MCF 10A (cell line): ENCODE measurements at regions of chrX and their contacts with region 1.

Region 1: DNA sequence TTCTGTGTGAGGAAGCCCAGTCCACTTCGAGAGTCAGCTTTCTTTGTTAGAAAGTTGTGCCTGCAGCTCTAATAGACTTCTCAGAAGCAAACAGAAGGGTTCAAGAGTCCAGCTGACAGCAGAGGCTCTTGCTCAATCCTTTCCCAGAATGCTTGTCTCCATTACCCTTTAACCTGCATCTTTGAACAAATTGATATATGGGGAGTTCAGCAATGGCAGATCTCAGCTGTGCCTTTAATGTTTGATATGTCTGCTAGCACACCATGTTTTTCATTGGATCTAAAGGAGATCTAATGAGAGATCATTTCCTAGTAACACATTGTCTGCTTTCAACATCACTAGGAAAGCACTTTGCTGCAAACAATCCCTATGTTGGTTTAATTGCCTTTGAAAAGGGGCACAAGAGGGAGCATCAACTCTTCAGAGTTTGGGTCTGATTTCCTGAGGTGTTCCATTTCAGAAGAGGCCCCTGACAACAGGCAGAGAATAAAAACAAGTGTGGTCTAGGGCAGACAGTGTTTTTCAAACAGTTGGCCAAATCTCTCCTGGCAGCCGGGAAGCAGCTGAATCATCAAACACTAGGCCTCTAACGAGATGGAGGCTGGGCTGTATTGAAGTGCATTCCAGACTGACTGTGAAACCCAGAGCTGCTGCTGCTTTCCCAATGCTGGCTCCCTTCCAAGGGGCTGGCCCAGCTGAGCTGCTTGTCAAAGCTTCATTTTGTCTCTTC is 55.5 kb downstream of the LUZP4 start:
- DNase-seq: peak; percentile 93
- H3K4me3 Mint-ChIP-seq: no peak overlapping the region
- H3K27ac Mint-ChIP-seq: peak overlapping the region; percentile 69
- H3K4me1 Mint-ChIP-seq: no peaks in the 10 kb centered on the region
- H3K27me3 Mint-ChIP-seq: peaks cover 41% of the 10 kb centered on the region
- CTCF ChIP-seq: no peak

Region 2: DNA sequence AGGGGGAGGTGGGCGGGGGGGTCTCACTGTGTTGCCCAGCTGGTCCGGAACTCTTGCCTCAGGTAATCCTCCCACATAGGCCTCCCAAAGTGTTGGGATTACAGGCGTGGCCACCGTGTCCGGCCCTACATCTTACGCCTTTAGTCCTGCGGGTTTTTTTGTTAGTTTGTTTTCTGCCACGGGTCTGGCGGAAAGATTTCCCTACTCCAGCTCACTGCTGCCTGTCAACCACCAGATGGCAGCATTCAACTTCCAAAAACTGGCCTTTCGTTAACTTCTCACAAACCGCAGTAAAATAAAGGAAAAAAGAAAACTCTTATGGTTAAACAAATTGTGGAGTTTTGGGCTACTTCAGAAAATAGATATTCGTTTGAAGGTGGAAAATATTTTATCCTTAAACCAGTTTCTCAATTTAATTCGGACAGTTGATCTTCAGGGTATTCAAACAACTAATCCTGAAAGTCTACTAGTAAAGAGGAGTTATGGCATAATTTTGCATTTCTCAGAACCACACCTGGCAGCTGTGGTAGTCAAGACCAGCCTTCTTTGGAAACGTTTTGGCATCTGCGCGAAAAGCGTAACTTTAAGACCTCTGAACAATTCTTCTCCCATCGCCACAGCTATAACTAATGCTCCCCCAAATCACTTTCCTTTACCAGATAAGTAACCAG is 14.4 kb before region 1 on chrX:
- CTCF ChIA-PET with region 1: interaction called, 10 read pairs
- POLR2A ChIA-PET with region 1: no interaction called
- intact Hi-C with region 1: no loop called
- DNase-seq: peak; percentile 70
- H3K4me3 Mint-ChIP-seq: no peak overlapping the region
- H3K27ac Mint-ChIP-seq: no peak overlapping the region
- H3K4me1 Mint-ChIP-seq: no peaks in the 10 kb centered on the region
- H3K27me3 Mint-ChIP-seq: peaks cover 55% of the 10 kb centered on the region
- CTCF ChIP-seq: peak; percentile 71

Region 3: DNA sequence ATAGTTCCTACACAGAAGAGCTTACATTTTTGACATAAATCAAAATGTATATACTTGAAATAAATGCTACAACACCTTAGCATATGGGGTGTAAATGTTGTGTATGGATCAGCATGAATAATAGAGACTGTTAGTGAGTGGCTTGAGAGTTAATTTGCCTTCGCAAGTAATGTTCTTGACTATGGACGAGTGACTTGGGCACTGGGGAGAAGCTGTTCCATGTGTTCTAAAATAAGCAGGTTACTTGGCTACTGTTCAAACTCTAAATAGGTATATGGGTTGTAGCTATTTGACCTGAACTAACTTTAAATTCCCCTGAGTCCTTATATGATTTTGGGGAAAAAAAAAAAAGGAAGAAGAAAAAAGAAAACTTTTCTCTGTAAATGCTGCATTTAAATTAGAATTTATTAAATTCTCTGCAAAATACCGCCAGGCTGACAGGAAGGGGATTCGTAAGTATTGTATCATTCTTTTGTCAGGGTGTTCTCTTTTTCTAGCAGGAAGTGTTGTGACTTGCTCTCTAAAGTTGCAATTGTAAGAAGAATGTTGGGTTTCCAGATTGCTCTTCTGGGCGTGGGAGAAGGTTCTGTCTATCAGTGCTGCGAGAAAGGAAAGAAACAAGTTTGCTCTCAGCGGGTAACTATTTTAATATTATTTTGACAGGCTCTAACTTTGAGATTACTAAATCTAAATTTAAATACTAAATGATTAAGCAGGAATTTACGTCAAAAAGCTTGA is 248.1 kb after region 1 on chrX:
- CTCF ChIA-PET with region 1: no interaction called
- POLR2A ChIA-PET with region 1: interaction called, 11 read pairs
- intact Hi-C with region 1: no loop called
- DNase-seq: peak; percentile 56
- H3K4me3 Mint-ChIP-seq: peak overlapping the region; percentile 72
- H3K27ac Mint-ChIP-seq: peak overlapping the region; percentile 87
- H3K4me1 Mint-ChIP-seq: peaks cover 12% of the 10 kb centered on the region
- H3K27me3 Mint-ChIP-seq: peaks cover 92% of the 10 kb centered on the region
- CTCF ChIP-seq: no peak